ENCODE measurements at regions of chr11 and their contacts with region 1.

Region 1: DNA sequence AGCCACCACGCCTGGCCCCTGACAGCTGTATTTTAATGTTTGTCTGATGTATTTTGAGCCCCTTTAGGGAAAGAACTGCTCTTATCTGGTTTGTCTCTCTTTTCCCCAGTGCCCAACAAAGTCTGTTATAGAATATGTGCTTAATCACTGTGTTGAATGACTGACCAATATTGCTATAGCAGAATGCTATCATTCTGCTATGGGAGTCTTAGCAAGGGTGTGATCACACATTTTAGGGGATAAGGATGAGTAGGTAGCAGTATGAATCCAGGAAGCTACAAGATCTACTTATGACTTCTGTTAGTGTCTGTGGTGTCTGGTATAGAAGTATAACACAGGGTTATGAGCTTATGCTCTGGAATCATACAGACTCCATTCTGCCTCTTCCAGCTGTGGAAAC is 117.5 kb upstream of the RRM1 start:
- DNase-seq: no peak
- ATAC-seq: no peak
- H3K4me3 ChIP-seq: no peak overlapping the region
- H3K27ac ChIP-seq: no peak overlapping the region
- H3K4me1 ChIP-seq: peaks cover 0 to 15% (median 5%) of the 10 kb centered on the region in 9 donors
- H3K27me3 ChIP-seq: no peaks in the 10 kb centered on the region
- CTCF ChIP-seq: no peak

Region 2: DNA sequence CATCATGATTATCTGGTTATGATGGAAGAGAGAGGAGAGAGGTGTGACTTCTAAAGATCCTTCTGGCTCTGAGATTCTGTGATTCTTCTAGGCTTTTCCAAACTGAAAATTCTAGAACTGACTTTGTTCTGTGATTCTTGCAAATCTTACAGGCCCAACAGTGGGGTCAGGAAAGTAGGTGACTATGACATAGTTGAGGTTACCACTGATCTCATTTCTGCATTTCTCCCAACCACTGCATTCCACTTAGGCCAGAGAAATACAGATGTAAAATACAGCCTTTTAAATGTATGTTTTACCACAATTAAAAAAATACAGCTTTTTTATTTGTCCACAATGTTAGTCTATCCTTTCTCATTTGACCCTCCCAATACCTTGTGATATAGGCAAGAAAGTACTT is 37.9 kb before region 1 on chr11:
- intact Hi-C with region 1: loop called in 1 of 10 experiments (anchors 1 kb)
- DNase-seq: no peak
- ATAC-seq: no peak
- H3K4me3 ChIP-seq: no peak overlapping the region
- H3K27ac ChIP-seq: no peak overlapping the region
- H3K4me1 ChIP-seq: peaks cover 7 to 69% (median 53%) of the 10 kb centered on the region in 9 donors
- H3K27me3 ChIP-seq: no peaks in the 10 kb centered on the region
- CTCF ChIP-seq: no peak